ENCODE measurements at regions of chr14 and their contacts with region 1.

Region 1: DNA sequence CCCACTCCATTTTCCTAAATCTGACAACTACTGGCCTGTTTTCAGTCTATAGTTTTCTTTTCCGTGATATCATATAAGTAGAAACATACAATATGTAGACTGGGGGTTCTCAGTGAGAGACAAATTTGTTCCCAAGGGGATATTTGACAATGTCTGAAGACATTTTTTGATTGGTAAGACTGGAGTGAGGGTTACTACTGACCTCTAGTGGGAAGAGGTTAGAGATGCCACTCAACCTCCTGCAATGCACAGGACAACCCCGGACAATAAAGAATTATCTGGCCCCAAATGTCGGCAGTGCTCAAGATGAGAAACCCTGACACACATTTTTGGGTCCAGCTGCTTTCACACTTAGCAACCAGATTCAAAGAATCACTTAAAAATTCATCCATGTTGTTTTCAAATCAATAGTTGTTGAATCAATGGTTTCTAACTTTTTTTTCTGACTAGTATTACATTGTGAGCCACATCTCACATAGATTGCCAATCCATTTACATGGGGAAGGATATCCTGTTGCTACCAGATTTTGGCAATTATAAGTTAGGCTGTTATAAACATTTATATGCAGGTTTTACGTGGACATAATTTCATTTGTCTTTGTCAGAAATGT is 307.1 kb downstream of the RPL10L start:
- DNase-seq: peak; percentile 64
- ATAC-seq: peak; percentile 93
- H3K4me3 ChIP-seq: no peak overlapping the region
- H3K27ac ChIP-seq: no peak overlapping the region
- H3K4me1 ChIP-seq: no peaks in the 10 kb centered on the region
- H3K27me3 ChIP-seq: peaks cover 7% of the 10 kb centered on the region; the same call in 1 of the 2 replicates
- CTCF ChIP-seq: peak; percentile 81

Region 2: DNA sequence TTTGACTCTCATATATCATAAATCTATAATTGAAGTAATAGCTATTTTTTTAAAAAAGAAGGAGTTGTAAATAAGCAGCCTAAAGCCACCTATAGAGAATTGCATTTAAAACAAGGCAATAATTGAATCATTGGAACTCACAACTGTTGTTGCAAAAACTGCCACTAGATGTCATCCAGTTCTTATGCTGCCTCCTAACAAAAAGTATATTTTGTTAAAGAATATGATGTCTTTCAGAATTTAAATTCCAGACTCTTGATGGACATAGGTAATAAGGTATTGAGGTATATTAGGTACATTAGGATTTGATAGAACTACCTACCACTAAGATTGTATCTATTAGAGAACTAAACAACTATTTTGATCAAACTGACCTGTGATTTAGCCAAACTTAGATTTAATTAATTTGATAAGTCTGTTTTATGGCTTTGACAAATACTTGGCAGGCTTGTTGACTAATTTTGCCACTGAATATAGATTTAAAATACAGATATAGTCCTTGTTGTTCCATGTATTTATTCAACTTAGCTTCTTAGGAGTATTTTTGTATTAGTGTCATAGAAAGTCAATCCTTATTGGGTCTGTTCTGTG is 94.2 kb before region 1 on chr14:
- CTCF ChIA-PET with region 1: no interaction called
- POLR2A ChIA-PET with region 1: no interaction called
- intact Hi-C with region 1: loop called (anchors 1 kb)
- DNase-seq: peak; percentile 64
- ATAC-seq: peak; percentile 35; the same call in 1 of the 2 replicates
- H3K4me3 ChIP-seq: no peak overlapping the region
- H3K27ac ChIP-seq: no peak overlapping the region
- H3K4me1 ChIP-seq: no peaks in the 10 kb centered on the region
- H3K27me3 ChIP-seq: no peaks in the 10 kb centered on the region
- CTCF ChIP-seq: peak; percentile 76

Region 3: GRCh38 chr14:46322730-46323403 is 21.6 kb before region 1 on chr14:
- CTCF ChIA-PET with region 1: no interaction called
- POLR2A ChIA-PET with region 1: no interaction called
- intact Hi-C with region 1: no loop called
- DNase-seq: no peak
- ATAC-seq: no peak
- H3K4me3 ChIP-seq: no peak overlapping the region
- H3K27ac ChIP-seq: no peak overlapping the region
- H3K4me1 ChIP-seq: no peaks in the 10 kb centered on the region
- H3K27me3 ChIP-seq: 0 out of 2 replicates have a peak, but pooled peaks cover 11% of the 10 kb centered on the region
- CTCF ChIP-seq: no peak

Measured in PC-3 (cell line).